Activated CD4-positive, alpha-beta memory T cell treated with anti-CD3 and anti-CD28 coated beads for 36 hours (primary cell): ENCODE measurements at regions of chr2 and their contacts with region 1.

Region 1: DNA sequence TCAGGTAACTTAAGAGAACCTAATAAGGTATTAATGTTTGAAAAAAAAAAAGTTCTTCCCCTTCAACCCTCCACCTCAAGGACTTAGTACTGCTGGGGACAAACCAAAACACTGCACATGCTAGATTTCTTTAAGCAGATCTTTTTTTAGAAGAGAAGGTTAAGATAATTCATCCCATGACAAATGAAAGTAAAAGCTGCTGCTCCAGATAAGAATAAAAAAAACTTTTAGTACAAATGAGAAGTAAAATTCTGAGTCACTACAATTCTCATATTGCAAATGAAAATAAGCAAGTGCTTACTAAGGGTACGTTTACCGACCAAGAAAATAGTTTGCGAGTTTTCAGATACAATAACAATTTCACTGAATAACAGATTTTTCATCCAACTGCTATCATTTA is 8.9 kb downstream of the STAM2 start:
- DNase-seq: no peak
- H3K4me3 Mint-ChIP-seq: no peak overlapping the region
- H3K27ac Mint-ChIP-seq: peak overlapping the region; percentile 28
- H3K4me1 Mint-ChIP-seq: peaks cover 46% of the 10 kb centered on the region
- H3K27me3 Mint-ChIP-seq: no peaks in the 10 kb centered on the region

Region 2: GRCh38 chr2:151481744-151482143 is 684.9 kb before region 1 on chr2:
- CTCF ChIA-PET with region 1: no interaction called
- POLR2A ChIA-PET with region 1: no interaction called
- intact Hi-C with region 1: loop called (anchors 5 kb)
- DNase-seq: peak; percentile 54
- H3K4me3 Mint-ChIP-seq: no peak overlapping the region
- H3K27ac Mint-ChIP-seq: peak overlapping the region; percentile 61
- H3K4me1 Mint-ChIP-seq: peaks cover 32% of the 10 kb centered on the region
- H3K27me3 Mint-ChIP-seq: no peaks in the 10 kb centered on the region

Region 3: DNA sequence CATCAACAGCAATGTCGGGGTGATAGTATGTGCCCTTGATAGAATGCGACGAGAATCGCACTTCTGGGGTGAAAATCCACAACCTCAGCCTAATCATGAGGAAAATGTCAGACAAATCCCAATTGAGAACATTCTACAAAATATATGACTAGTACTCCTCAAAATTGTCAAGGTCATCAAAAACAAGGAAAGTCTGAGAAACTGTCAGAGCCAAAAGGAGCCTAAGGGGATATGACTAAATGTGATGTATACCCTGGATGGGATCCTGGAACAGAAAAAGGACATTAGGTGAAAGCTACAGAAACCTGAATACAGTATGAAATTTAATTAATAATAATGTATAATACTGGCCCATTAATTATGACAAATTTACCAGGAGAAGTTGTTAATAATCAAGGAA is 60.2 kb before region 1 on chr2:
- CTCF ChIA-PET with region 1: no interaction called
- POLR2A ChIA-PET with region 1: no interaction called
- intact Hi-C with region 1: no loop called
- DNase-seq: no peak
- H3K4me3 Mint-ChIP-seq: no peak overlapping the region
- H3K27ac Mint-ChIP-seq: no peak overlapping the region
- H3K4me1 Mint-ChIP-seq: no peaks in the 10 kb centered on the region
- H3K27me3 Mint-ChIP-seq: peaks cover 7% of the 10 kb centered on the region

Region 4: DNA sequence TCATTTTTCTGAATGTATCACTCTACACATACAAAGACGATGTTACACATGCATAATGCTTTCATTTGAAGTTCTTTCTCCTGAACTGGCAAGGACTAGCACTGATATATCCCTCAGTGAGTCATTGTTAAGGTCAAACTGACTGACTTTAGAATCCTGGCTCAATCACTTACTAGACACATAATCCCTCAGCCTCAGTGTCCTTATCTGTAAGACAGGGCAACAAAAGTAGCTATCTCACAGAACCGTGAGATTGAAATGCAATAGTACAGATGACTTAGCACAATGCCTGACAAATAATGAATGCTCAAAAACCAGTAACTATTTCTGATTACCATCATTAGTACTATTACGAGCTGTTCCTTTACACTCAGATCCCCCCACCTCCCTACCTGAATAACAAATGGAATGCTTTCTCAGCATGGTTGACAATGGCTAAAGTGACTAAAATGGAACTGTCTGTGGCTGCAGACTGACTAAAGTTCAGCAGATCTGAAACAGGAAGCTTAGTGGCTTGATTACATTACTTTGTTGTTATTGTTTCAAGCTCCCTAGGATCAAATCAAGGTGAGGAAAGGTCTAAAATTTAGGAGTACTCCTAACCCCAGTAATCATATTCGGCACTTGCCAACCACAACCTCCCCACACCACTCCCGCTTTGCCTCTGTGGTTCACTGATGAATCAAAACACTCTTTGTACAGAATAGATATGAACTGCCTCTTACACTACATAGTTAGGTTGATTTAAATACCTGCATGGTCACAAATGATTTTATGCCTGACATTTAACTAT is 31.9 kb before region 1 on chr2:
- CTCF ChIA-PET with region 1: no interaction called
- POLR2A ChIA-PET with region 1: no interaction called
- intact Hi-C with region 1: loop called (anchors 1 kb)
- DNase-seq: peak; percentile 69
- H3K4me3 Mint-ChIP-seq: no peak overlapping the region
- H3K27ac Mint-ChIP-seq: no peak overlapping the region
- H3K4me1 Mint-ChIP-seq: peaks cover 12% of the 10 kb centered on the region
- H3K27me3 Mint-ChIP-seq: no peaks in the 10 kb centered on the region